OCI-LY7 (cell line): ENCODE measurements at regions of chr17 and their contacts with region 1.

Region 1: GRCh38 chr17:74961657-74962490 is 10.7 kb downstream of the HID1 start:
- DNase-seq: peak; percentile 90
- H3K4me3 ChIP-seq: no peak overlapping the region
- H3K27ac ChIP-seq: no peak overlapping the region
- H3K4me1 ChIP-seq: peaks cover 7% of the 10 kb centered on the region
- CTCF ChIP-seq: peak; percentile 95

Region 2: GRCh38 chr17:74833501-74834377 is 128.1 kb before region 1 on chr17:
- CTCF ChIA-PET with region 1: interaction called, 12 read pairs
- POLR2A ChIA-PET with region 1: interaction called, 5 read pairs
- intact Hi-C with region 1: no loop called
- DNase-seq: peak; percentile 82
- H3K4me3 ChIP-seq: peak overlapping the region; percentile 35
- H3K27ac ChIP-seq: peak overlapping the region; percentile 60
- H3K4me1 ChIP-seq: peaks cover 40% of the 10 kb centered on the region
- CTCF ChIP-seq: no peak

Region 3: DNA sequence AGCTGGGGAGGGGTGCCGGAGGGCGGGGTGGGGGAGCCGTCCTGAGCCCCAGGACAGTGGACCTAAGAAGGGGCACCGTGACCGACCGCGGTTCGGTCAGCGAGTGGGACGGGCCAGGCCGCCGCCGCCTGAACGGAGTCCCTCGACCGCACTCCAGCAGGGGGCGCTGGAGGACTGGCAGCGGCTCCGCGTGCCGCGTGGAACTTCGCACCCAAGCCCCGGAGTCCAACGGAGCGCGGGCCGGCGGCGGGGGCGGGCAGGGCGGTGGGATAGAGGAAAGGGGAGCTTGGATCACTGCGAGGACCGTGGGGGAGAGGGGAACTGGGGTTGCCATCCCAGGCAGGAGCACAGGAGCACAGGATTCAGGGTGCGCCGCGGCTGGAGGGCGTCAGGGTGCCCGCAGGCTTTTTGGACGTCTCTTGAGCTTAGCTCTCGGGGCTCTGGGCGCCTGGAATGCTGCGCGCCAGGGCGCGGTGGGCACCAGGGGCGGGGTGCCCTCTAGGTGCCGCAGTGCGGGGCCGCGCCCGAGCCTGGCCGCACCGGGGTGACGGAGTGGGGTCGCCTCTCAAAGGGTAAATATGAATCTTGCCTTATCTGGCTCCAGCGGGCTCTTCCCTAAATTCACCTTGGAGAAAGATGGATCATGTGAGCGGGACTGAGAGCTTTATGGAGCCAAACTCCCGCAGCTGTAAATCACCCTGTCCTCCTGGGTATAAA is 38.2 kb before region 1 on chr17:
- CTCF ChIA-PET with region 1: interaction called, 7 read pairs
- POLR2A ChIA-PET with region 1: no interaction called
- intact Hi-C with region 1: loop called (anchors 1 kb)
- DNase-seq: peak; percentile 59
- H3K4me3 ChIP-seq: no peak overlapping the region
- H3K27ac ChIP-seq: no peak overlapping the region
- H3K4me1 ChIP-seq: no peaks in the 10 kb centered on the region
- CTCF ChIP-seq: peak; percentile 86

Region 4: DNA sequence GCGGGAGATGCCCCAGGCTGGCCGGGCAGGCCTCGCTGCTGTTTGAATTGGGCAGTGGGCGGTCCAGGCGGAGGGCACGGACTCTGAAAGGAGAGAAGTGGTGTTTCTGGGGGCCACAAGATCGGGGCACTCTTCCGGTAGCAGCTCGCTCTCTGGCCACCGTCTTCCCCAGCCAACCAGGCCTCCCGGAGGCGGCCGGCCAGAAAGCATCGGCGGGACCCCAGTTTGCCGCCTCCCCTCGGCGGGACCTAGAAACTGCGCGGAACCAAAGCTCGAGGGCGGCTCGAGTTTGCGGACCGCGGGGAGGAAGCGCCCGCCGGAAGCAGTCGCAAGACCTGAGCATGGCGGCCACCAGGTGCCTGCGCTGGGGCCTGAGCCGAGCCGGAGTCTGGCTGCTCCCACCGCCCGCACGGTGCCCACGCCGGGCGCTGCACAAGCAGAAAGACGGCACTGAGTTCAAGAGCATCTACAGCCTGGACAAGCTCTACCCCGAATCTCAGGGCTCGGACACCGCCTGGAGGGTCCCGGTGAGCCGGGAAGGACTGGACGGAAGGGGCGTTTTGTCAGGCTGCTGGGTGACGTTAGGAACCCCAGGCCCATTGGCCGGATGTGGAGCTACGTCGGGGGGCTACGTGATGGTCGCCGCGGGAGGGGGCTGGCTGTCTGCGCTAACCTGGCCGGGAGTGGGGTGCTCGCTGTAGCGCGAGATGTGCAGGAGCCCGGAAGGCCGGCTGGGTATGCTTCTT is 50.6 kb after region 1 on chr17 and contains the start of gene MRPL58:
- CTCF ChIA-PET with region 1: interaction called, 26 read pairs
- POLR2A ChIA-PET with region 1: interaction called, 16 read pairs
- intact Hi-C with region 1: loop called (anchors 1 kb)
- DNase-seq: peak; percentile 94
- H3K4me3 ChIP-seq: peak within 1 kb of the TSS; percentile 73
- H3K27ac ChIP-seq: peak within 1 kb of the TSS; percentile 54
- H3K4me1 ChIP-seq: peaks cover 16% of the 10 kb centered on the region
- CTCF ChIP-seq: peak; percentile 63
- total RNA-seq, gene MRPL58: 79.8 and 84.2 TPM in 2 replicates

Region 5: GRCh38 chr17:75205037-75205792 is 243.3 kb after region 1 on chr17 and contains the start of gene NUP85:
- CTCF ChIA-PET with region 1: interaction called, 7 read pairs
- POLR2A ChIA-PET with region 1: no interaction called
- intact Hi-C with region 1: loop called (anchors 1 kb)
- DNase-seq: peak; percentile 96
- H3K4me3 ChIP-seq: peak within 1 kb of the TSS; percentile 86
- H3K27ac ChIP-seq: peak within 1 kb of the TSS; percentile 72
- H3K4me1 ChIP-seq: peaks cover 19% of the 10 kb centered on the region
- CTCF ChIP-seq: no peak
- total RNA-seq, gene NUP85: 129 and 130 TPM in 2 replicates